ENCODE measurements at regions of chr1 and their contacts with region 1.

Region 1: DNA sequence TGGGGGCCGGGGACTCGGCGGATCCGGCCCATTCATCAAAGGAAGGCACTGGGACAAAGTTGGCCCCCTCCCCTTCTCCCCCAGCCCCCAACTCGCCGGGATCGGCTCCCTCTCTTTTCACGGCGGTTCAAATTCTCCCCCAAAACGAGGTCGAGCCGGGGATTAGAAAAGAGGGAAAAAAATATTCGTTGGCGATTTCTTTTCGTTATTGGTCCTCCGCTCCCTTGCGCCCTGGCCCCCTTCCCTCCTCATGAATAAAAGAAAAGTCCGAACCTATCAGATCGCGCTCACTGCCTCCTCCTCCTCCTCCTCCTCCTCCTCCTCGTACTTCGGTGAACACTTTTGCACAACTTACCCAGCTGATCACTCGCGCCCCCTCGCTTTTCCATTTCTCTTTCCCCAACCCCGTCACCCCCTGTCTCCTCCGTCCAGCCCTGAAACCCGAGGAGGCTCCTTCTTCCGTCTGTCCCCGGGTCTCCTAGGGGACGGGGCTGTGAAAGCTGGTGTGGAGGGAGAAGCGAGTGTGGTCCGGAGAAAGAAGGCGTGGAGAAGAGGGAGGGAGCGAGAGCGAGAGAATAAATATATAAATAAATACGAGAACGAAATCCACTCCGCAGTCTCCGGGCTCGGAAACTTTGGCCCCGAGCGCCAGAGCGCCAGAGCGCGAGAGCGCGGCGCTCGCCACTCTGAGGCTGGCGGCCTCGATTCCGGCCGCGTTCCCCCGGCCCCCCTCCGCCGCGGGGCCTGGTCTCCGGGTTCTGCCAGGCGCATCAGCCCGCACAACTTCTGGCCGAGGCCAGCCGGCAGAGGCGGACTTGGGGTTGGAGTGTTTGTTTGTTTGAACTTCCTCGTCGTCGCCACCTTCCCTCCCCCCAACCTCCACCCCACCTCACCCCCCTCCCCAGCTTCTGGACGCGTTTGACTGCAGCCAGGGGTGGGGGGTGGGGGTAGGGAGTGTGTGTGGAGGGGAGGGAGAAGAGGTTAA is at the start of gene PAX7:
- DNase-seq: peak; percentile 79 to 81
- H3K4me3 ChIP-seq: peak within 1 kb of the TSS; percentile 47 to 61 (median 53)
- H3K27ac ChIP-seq: no peak within 1 kb of the TSS
- H3K4me1 ChIP-seq: peaks cover 12 to 43% (median 30%) of the 10 kb centered on the region in 4 experiments
- H3K27me3 ChIP-seq: peaks cover 76 to 95% (median 90%) of the 10 kb centered on the region in 4 experiments
- CTCF ChIP-seq: no peak
- EP300 ChIP-seq: no peak
- POLR2A ChIP-seq: no peak
- RAD21 ChIP-seq: 0 out of 4 replicates have a peak, but pooled peaks of 1 of the 2 experiments have one; percentile 1
- total RNA-seq, gene PAX7: not detected in 2 replicates

Region 2: DNA sequence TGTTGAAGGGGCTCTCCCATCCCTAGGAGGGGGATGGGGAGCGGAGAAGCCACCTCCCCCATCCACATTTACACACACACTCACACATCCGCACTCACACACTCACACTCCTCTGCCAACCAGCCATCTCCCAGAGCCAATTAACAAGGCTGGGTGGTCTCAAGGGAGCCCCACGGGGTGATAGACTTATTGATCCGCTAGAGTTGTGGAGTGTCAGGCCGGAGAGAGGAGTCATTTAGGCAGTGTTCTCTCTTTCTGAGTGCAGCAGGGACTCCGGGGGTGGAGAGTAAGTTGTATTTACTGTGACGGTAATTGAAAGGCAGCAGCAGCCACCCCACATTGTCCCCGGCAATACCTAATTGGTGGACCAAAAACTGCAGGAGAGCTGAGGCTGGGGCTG is 88.5 kb before region 1 on chr1:
- CTCF ChIA-PET with region 1: no interaction called
- POLR2A ChIA-PET with region 1: no interaction called
- DNase-seq: no peak
- H3K4me3 ChIP-seq: peak overlapping the region in 3 of 4 experiments; percentile 2 to 18 (median 14); a peak in 4 of 8 replicates
- H3K27ac ChIP-seq: no peak overlapping the region
- H3K4me1 ChIP-seq: peaks cover 0 to 7% (median 3%) of the 10 kb centered on the region in 4 experiments; a peak in 5 of 7 replicates
- H3K27me3 ChIP-seq: peaks cover 0 to 7% (median 0%) of the 10 kb centered on the region in 4 experiments; a peak in 4 of 7 replicates
- CTCF ChIP-seq: no peak
- EP300 ChIP-seq: no peak
- POLR2A ChIP-seq: no peak
- RAD21 ChIP-seq: no peak

Region 3: GRCh38 chr1:18556364-18556763 is 74.4 kb before region 1 on chr1:
- CTCF ChIA-PET with region 1: no interaction called
- POLR2A ChIA-PET with region 1: no interaction called
- DNase-seq: no peak
- H3K4me3 ChIP-seq: no peak overlapping the region
- H3K27ac ChIP-seq: no peak overlapping the region
- H3K4me1 ChIP-seq: peaks cover 0 to 16% (median 6%) of the 10 kb centered on the region in 4 experiments; a peak in 5 of 7 replicates
- H3K27me3 ChIP-seq: peaks cover 0 to 6% (median 0%) of the 10 kb centered on the region in 4 experiments; a peak in 2 of 7 replicates
- CTCF ChIP-seq: peak; percentile 21 to 66 (median 54)
- EP300 ChIP-seq: no peak
- POLR2A ChIP-seq: no peak
- RAD21 ChIP-seq: peak; percentile 17 to 34; a peak in 2 of 4 replicates

Region 4: GRCh38 chr1:18643154-18644012 is 12.6 kb after region 1 on chr1:
- CTCF ChIA-PET with region 1: interaction called, 19 read pairs
- POLR2A ChIA-PET with region 1: interaction called, 56 read pairs
- DNase-seq: peak in 1 of 2 experiments; percentile 77
- H3K4me3 ChIP-seq: peak overlapping the region; percentile 8 to 58 (median 38); a peak in 6 of 8 replicates
- H3K27ac ChIP-seq: no peak overlapping the region
- H3K4me1 ChIP-seq: peaks cover 7 to 58% (median 29%) of the 10 kb centered on the region in 4 experiments
- H3K27me3 ChIP-seq: peaks cover 73 to 96% (median 90%) of the 10 kb centered on the region in 4 experiments
- CTCF ChIP-seq: no peak
- EP300 ChIP-seq: no peak
- POLR2A ChIP-seq: no peak
- RAD21 ChIP-seq: no peak

Region 5: DNA sequence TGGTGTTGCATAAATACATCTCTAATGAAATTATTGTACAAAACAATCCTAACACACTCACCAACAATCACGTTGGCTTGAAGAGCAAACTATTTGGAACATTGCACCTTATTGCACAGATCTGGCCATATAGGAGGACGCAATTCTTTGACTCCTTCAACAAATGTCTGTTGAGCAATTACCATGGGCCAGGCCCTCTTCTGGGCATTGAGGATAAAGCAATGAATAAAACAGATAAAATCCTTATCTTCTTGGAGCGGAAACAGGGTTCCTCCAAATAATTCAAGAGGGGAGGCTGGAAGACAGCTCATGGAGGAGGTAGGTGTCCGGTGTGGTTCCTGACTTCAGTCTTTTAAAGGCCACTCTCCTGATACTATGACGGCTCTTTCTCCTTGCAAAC is 43.2 kb after region 1 on chr1:
- CTCF ChIA-PET with region 1: interaction called, 10 read pairs
- POLR2A ChIA-PET with region 1: no interaction called
- DNase-seq: no peak
- H3K4me3 ChIP-seq: no peak overlapping the region
- H3K27ac ChIP-seq: no peak overlapping the region
- H3K4me1 ChIP-seq: peaks cover 13 to 29% (median 20%) of the 10 kb centered on the region in 4 experiments
- H3K27me3 ChIP-seq: peaks cover 0 to 41% (median 31%) of the 10 kb centered on the region in 4 experiments; a peak in 5 of 7 replicates
- CTCF ChIP-seq: peak in 2 of 3 experiments; percentile 23 to 28; a peak in 3 of 4 replicates
- EP300 ChIP-seq: no peak
- POLR2A ChIP-seq: no peak
- RAD21 ChIP-seq: peak in 1 of 2 experiments; percentile 38; a peak in 1 of 4 replicates

Measured in H1 (cell line).